ENCODE measurements at regions of chr4 and their contacts with region 1.

Region 1: GRCh38 chr4:185134307-185134869 is 8.7 kb upstream of the SLC25A4 start:
- DNase-seq: peak; percentile 66
- ATAC-seq: peak; percentile 69
- H3K4me3 ChIP-seq: no peak overlapping the region
- H3K4me3 Mint-ChIP-seq: no peak overlapping the region
- H3K27ac ChIP-seq: no peak overlapping the region
- H3K27ac Mint-ChIP-seq: no peak overlapping the region
- H3K4me1 ChIP-seq: no peaks in the 10 kb centered on the region
- H3K4me1 Mint-ChIP-seq: no peaks in the 10 kb centered on the region
- H3K27me3 ChIP-seq: peaks cover 0 to 6% (median 3%) of the 10 kb centered on the region in 4 experiments
- H3K27me3 Mint-ChIP-seq: peaks cover 24% of the 10 kb centered on the region
- CTCF ChIP-seq: peak; percentile 94

Region 2: DNA sequence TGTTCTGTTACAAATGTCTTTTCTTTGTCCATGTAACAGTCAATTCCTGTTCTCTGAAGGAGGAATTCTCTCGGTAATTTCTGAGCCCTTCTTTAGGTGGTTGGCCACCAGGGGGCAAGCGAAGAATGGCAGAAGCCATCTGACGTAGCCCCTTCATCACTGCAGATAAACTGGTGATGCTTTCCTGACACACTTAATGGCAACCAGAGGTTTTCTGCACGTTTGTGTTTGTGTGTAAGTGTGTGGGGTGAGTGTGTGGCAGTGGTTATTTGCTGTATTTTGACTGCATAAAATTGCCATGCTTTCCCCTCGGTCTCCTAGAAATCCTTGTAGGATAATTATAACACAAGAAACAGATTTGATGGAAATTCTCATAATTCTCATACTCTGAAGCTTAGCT is 1294.1 kb before region 1 on chr4:
- CTCF ChIA-PET with region 1: interaction called, 4 read pairs
- POLR2A ChIA-PET with region 1: no interaction called
- intact Hi-C with region 1: loop called (anchors 10 kb)
- DNase-seq: peak; percentile 60
- ATAC-seq: peak; percentile 39
- H3K4me3 ChIP-seq: no peak overlapping the region
- H3K4me3 Mint-ChIP-seq: no peak overlapping the region
- H3K27ac ChIP-seq: no peak overlapping the region
- H3K27ac Mint-ChIP-seq: no peak overlapping the region
- H3K4me1 ChIP-seq: no peaks in the 10 kb centered on the region
- H3K4me1 Mint-ChIP-seq: no peaks in the 10 kb centered on the region
- H3K27me3 ChIP-seq: peaks cover 0 to 2% (median 0%) of the 10 kb centered on the region in 4 experiments
- H3K27me3 Mint-ChIP-seq: peaks cover 35% of the 10 kb centered on the region
- CTCF ChIP-seq: peak; percentile 86

Region 3: DNA sequence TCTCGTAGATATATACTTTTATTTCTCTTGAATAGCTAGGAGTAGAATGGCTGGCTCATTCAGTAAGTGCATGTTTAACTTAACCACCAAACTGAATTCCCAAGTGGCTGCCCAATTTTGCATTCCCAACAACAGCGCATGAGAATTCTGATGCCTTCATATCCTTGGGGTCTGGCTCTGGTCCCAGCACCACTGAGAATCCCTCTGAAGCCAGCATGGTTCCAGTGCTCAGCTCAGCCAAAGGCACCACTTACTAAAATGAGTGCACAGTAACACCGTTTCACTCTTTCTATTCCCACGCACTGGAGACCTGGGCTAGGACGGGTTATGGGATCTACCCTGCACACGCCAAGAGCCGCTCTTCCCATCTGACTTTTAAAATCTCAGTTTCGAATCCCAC is 545.5 kb before region 1 on chr4:
- CTCF ChIA-PET with region 1: no interaction called
- POLR2A ChIA-PET with region 1: no interaction called
- intact Hi-C with region 1: no loop called
- DNase-seq: no peak
- ATAC-seq: no peak
- H3K4me3 ChIP-seq: no peak overlapping the region
- H3K4me3 Mint-ChIP-seq: no peak overlapping the region
- H3K27ac ChIP-seq: no peak overlapping the region
- H3K27ac Mint-ChIP-seq: no peak overlapping the region
- H3K4me1 ChIP-seq: peaks cover 0 to 5% of the 10 kb centered on the region in 2 donors
- H3K4me1 Mint-ChIP-seq: peaks cover 15% of the 10 kb centered on the region
- H3K27me3 ChIP-seq: no peaks in the 10 kb centered on the region
- H3K27me3 Mint-ChIP-seq: no peaks in the 10 kb centered on the region
- CTCF ChIP-seq: no peak

Region 4: DNA sequence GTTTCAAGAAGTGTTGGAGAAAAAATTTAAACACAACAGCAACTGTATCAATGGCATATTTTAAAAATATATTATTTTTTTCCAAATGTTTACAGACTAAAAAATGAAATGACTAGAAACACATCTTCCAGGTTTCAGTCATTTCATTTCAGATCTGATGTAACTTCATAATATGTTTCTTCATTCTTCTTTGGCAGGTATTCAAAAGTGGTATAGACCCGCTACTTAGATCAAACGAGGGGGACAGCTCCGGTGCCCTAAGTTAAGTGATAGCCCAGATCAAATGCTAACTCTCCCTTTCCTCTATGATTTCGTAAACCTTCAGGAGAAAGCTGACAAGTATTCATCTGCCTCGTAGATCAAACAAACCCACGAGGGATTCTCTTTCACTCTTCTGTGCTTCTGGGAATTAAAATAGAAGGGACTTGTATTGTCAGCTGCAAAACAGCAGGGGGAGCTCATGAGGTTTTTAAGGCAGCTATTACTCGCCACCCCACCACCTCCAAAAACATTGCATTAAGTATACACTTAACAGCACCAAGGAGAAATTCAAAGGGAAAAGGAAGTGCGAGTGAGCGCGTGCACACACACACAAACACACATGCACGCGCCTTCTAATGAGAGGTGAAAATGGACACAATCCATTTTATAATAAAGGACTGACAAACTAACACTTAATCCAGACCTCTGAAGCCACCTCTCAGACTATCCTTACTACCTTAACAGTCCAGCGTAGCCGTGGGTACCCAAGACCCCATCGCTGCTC is 94.7 kb before region 1 on chr4:
- CTCF ChIA-PET with region 1: interaction called, 34 read pairs
- POLR2A ChIA-PET with region 1: no interaction called
- intact Hi-C with region 1: loop called (anchors 1 kb)
- DNase-seq: peak; percentile 73
- ATAC-seq: peak; percentile 86
- H3K4me3 ChIP-seq: no peak overlapping the region
- H3K4me3 Mint-ChIP-seq: peak overlapping the region; percentile 16
- H3K27ac ChIP-seq: no peak overlapping the region
- H3K27ac Mint-ChIP-seq: no peak overlapping the region
- H3K4me1 ChIP-seq: peaks cover 0 to 5% of the 10 kb centered on the region in 2 donors
- H3K4me1 Mint-ChIP-seq: peaks cover 5% of the 10 kb centered on the region
- H3K27me3 ChIP-seq: peaks cover 0 to 3% (median 0%) of the 10 kb centered on the region in 4 experiments
- H3K27me3 Mint-ChIP-seq: peaks cover 28% of the 10 kb centered on the region
- CTCF ChIP-seq: peak; percentile 87

Region 5: DNA sequence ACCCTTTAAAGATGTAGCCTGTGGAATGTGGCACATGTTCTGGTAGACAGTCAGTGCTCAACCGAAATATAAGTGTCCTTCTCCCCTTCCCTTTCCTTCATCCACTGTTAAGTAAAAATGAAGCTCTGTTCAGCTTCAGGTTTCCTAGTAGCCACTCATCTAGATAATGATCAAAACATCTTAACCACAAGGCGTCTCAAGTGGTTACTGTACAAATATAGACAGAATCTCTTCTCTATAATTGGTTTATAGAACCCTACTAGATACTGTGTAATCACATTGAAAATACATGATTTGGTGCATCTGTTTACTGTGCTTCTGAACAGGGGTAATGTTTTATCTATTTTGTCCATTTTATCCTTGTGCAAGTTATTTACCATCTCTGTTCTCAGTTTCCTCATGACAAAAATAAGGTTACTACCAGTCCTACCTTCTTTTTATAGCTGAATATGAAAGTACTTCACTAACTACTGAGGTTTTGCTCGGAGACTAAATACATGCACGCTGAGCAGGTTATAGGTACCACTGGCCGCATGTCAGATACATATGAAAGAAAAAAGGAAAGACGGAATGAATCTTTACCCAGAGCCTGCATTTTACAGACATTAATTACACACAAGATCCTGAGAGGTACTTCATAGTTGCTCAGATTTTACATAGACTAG is 11.6 kb before region 1 on chr4:
- CTCF ChIA-PET with region 1: interaction called, 20 read pairs
- POLR2A ChIA-PET with region 1: no interaction called
- intact Hi-C with region 1: no loop called
- DNase-seq: no peak
- ATAC-seq: no peak
- H3K4me3 ChIP-seq: no peak overlapping the region
- H3K4me3 Mint-ChIP-seq: no peak overlapping the region
- H3K27ac ChIP-seq: no peak overlapping the region
- H3K27ac Mint-ChIP-seq: no peak overlapping the region
- H3K4me1 ChIP-seq: peaks cover 5 to 12% of the 10 kb centered on the region in 2 donors
- H3K4me1 Mint-ChIP-seq: peaks cover 14% of the 10 kb centered on the region
- H3K27me3 ChIP-seq: peaks cover 0 to 13% (median 6%) of the 10 kb centered on the region in 4 experiments
- H3K27me3 Mint-ChIP-seq: peaks cover 30% of the 10 kb centered on the region
- CTCF ChIP-seq: no peak

Region 6: GRCh38 chr4:185304944-185305690 is 170.7 kb after region 1 on chr4:
- CTCF ChIA-PET with region 1: interaction called, 7 read pairs
- POLR2A ChIA-PET with region 1: no interaction called
- intact Hi-C with region 1: loop called (anchors 2 kb)
- DNase-seq: peak; percentile 75
- ATAC-seq: peak; percentile 88
- H3K4me3 ChIP-seq: no peak overlapping the region
- H3K4me3 Mint-ChIP-seq: no peak overlapping the region
- H3K27ac ChIP-seq: no peak overlapping the region
- H3K27ac Mint-ChIP-seq: peak overlapping the region; percentile 4
- H3K4me1 ChIP-seq: peaks cover 18 to 30% of the 10 kb centered on the region in 2 donors
- H3K4me1 Mint-ChIP-seq: peaks cover 36% of the 10 kb centered on the region
- H3K27me3 ChIP-seq: no peaks in the 10 kb centered on the region
- H3K27me3 Mint-ChIP-seq: no peaks in the 10 kb centered on the region
- CTCF ChIP-seq: peak; percentile 70

Measured in B cell (primary cell).